ENCODE measurements at regions of chr4 and their contacts with region 1.

Region 1: DNA sequence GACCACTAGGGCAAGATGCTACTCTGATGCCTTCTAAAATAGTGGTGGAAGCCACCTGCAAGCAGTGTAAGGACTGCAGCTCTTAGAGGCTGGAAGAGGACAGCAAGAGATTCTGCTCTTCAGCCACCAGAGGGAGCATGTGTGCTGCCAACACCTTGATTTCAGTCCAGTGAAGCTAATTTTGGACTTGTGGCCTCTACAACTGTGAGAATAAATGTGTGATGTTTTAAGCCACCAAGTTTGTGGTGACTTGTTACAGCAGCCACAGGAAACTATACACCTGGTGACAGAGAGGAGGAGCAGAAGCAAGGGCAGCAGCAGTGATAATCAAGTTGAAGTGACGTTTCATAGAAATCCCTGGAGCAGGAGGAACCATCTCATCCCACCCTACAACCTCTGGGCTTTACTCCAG is 55.9 kb downstream of the FGFBP1 start:
- DNase-seq: peak; percentile 37 to 87
- ATAC-seq: peak; percentile 89 to 98
- H3K4me3 ChIP-seq: no peak overlapping the region
- H3K27ac ChIP-seq: peak overlapping the region in 1 of 2 experiments; percentile 61; a peak in 2 of 6 replicates
- H3K4me1 ChIP-seq: 0 out of 3 replicates have a peak, but pooled peaks cover 3% of the 10 kb centered on the region
- CTCF ChIP-seq: peak; percentile 86
- EP300 ChIP-seq: no peak
- POLR2A ChIP-seq: no peak
- RAD21 ChIP-seq: peak; percentile 94 to 98

Region 2: GRCh38 chr4:15848191-15848842 is 34.4 kb before region 1 on chr4:
- CTCF ChIA-PET with region 1: interaction called, 16 read pairs
- POLR2A ChIA-PET with region 1: interaction called, 3 read pairs
- DNase-seq: no peak
- ATAC-seq: no peak
- H3K4me3 ChIP-seq: no peak overlapping the region
- H3K27ac ChIP-seq: no peak overlapping the region
- H3K4me1 ChIP-seq: no peaks in the 10 kb centered on the region
- CTCF ChIP-seq: no peak
- EP300 ChIP-seq: no peak
- POLR2A ChIP-seq: no peak
- RAD21 ChIP-seq: no peak

Region 3: DNA sequence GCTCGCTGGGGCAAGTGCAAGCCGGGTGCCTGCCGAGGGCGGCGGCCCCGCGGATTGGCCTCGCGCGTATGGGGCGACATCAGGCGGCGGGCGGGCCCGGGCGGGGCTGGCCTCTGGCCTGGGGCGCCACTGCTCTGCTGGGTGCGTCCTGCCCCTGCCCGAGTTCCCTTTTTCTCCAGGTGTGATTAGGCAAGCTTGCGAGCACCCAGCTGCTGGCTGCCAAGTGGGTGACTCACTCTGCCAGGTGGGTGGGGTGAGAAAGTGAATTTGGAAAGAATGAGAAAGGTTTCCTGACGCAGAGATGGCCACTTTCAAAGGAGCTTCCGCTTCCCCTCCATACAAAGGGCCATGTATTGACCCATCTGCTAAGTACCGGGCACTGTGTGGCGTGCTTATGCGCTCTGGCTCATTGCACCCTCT is 23.4 kb after region 1 on chr4:
- CTCF ChIA-PET with region 1: interaction called, 24 read pairs
- POLR2A ChIA-PET with region 1: no interaction called
- DNase-seq: peak; percentile 85 to 90
- ATAC-seq: peak; percentile 96 to 97
- H3K4me3 ChIP-seq: peak overlapping the region; percentile 30
- H3K27ac ChIP-seq: peak overlapping the region; percentile 75 to 87
- H3K4me1 ChIP-seq: peaks cover 17% of the 10 kb centered on the region; the same call in 2 of the 3 replicates
- CTCF ChIP-seq: no peak
- EP300 ChIP-seq: peak; percentile 44 to 50; a peak in 2 of 5 replicates
- POLR2A ChIP-seq: no peak
- RAD21 ChIP-seq: peak in 1 of 2 experiments; percentile 44; a peak in 2 of 5 replicates

Region 4: GRCh38 chr4:15930314-15930713 is 47.6 kb after region 1 on chr4:
- CTCF ChIA-PET with region 1: interaction called, 31 read pairs
- POLR2A ChIA-PET with region 1: no interaction called
- DNase-seq: no peak
- ATAC-seq: no peak
- H3K4me3 ChIP-seq: no peak overlapping the region
- H3K27ac ChIP-seq: no peak overlapping the region
- H3K4me1 ChIP-seq: no peaks in the 10 kb centered on the region
- CTCF ChIP-seq: no peak
- EP300 ChIP-seq: no peak
- POLR2A ChIP-seq: no peak
- RAD21 ChIP-seq: no peak

Region 5: DNA sequence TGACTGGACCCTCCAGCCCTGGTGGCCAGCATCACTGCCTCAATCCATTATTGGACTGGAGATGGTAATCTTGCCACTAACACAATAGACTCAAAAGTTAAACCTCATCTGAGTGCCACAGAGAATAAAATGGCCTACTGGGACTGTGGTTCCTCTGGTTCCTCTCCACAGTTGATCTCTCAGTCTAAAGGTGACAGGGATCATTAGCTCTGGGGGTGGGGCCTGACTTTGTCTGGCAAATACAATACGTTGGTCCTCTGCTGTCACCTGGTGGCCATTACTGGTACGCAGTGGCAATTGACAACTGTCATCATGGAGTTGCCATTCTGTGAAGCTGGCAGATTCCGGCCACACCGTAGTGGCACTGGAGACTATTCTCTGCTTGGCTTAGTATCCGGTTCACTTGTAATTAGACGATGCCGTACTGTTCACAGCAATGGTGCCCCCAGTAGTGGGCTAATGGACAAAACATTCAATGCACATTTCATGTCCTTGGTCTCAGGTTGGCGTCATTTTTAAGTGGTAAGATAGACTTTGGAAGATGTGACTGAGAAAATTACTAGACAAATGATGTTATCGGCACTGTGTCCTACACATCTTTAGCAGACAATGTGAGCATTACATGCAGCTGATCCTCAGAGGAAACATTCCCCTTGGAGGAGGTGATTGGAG is 73.6 kb after region 1 on chr4:
- CTCF ChIA-PET with region 1: interaction called, 188 read pairs
- POLR2A ChIA-PET with region 1: no interaction called
- DNase-seq: peak; percentile 72 to 77
- ATAC-seq: peak; percentile 94 to 96
- H3K4me3 ChIP-seq: no peak overlapping the region
- H3K27ac ChIP-seq: peak overlapping the region; percentile 19 to 57; a peak in 3 of 6 replicates
- H3K4me1 ChIP-seq: peaks cover 5% of the 10 kb centered on the region
- CTCF ChIP-seq: peak; percentile 92
- EP300 ChIP-seq: no peak
- POLR2A ChIP-seq: no peak
- RAD21 ChIP-seq: peak; percentile 97 to 99

Region 6: DNA sequence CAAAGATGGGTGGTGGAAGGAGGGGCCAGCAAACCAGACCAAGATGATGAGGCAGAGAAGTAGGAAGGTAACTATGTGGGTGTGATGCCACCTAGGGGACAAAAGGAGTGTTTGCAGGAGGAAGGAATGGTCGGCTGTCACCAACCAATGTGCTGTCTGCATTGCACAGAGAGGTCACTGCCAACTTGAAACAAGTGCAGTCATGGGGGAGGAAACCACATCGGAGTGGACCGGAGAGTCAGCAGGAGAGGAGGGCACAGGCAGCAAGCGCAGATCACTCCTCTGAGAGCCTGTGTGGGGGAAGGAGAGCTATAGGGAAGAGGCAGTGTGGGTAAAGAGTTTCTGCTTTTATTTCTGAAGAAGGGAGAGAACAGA is 118.8 kb after region 1 on chr4:
- CTCF ChIA-PET with region 1: interaction called, 19 read pairs
- POLR2A ChIA-PET with region 1: no interaction called
- DNase-seq: peak; percentile 58 to 73
- ATAC-seq: peak; percentile 98 to 99
- H3K4me3 ChIP-seq: no peak overlapping the region
- H3K27ac ChIP-seq: no peak overlapping the region
- H3K4me1 ChIP-seq: no peaks in the 10 kb centered on the region
- CTCF ChIP-seq: peak; percentile 70
- EP300 ChIP-seq: no peak
- POLR2A ChIP-seq: no peak
- RAD21 ChIP-seq: peak; percentile 79 to 89